Left lung (tissue), 14 donors: ENCODE measurements at regions of chrX and their contacts with region 1.

Region 1: GRCh38 chrX:37825209-37825842 is 22.0 kb downstream of the DYNLT3 start:
- DNase-seq: peak in 2 of 4 donors; percentile 24 to 44
- ATAC-seq: peak; percentile 85
- H3K4me3 ChIP-seq: no peak overlapping the region
- H3K27ac ChIP-seq: no peak overlapping the region
- H3K4me1 ChIP-seq: peaks cover 4 to 6% of the 10 kb centered on the region in 2 donors
- H3K27me3 ChIP-seq: no peaks in the 10 kb centered on the region
- CTCF ChIP-seq: peak; percentile 59 to 89

Region 2: GRCh38 chrX:37509349-37509748 is 316.0 kb before region 1 on chrX:
- intact Hi-C with region 1: loop called in 1 of 2 experiments (anchors 10 kb)
- DNase-seq: peak in 1 of 4 donors; percentile 5
- ATAC-seq: peak; percentile 56
- H3K4me3 ChIP-seq: no peak overlapping the region
- H3K27ac ChIP-seq: no peak overlapping the region
- H3K4me1 ChIP-seq: no peaks in the 10 kb centered on the region
- H3K27me3 ChIP-seq: no peaks in the 10 kb centered on the region
- CTCF ChIP-seq: peak in 1 of 2 donors; percentile 15

Region 3: DNA sequence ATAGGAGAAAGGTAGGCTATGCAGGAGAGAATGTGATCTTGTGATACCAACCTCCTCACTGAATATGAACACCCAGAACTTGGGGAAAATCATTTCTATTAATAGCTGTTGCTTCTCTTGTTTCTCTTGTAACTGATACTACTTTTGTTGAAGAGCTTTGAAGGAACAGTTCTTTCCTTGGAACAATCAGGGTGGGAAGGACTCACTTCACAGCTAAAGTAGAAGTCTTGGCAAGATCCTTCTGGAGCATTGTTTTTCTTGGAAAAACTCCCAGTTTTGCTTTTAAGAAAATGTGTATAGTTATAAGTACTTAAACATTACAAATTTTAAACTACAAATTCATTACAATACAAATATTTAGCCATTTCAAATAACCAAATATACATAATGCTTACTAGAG is 158.8 kb before region 1 on chrX:
- intact Hi-C with region 1: no loop called
- DNase-seq: peak in 1 of 4 donors; percentile 40
- ATAC-seq: peak; percentile 52
- H3K4me3 ChIP-seq: no peak overlapping the region
- H3K27ac ChIP-seq: no peak overlapping the region
- H3K4me1 ChIP-seq: no peaks in the 10 kb centered on the region
- H3K27me3 ChIP-seq: no peaks in the 10 kb centered on the region
- CTCF ChIP-seq: no peak